Heart right ventricle (tissue), 16 donors: ENCODE measurements at regions of chr20 and their contacts with region 1.

Region 1: GRCh38 chr20:50415516-50416113 is 94.6 kb upstream of the PTPN1 start:
- DNase-seq: peak; percentile 99 to 100
- ATAC-seq: peak; percentile 96 to 99 (median 99)
- H3K4me3 ChIP-seq: peak overlapping the region in 4 of 10 donors; percentile 7 to 12 (median 11)
- H3K27ac ChIP-seq: peak overlapping the region; percentile 89 to 99 (median 96)
- H3K4me1 ChIP-seq: peaks cover 13 to 52% (median 31%) of the 10 kb centered on the region in 9 donors
- H3K27me3 ChIP-seq: no peaks in the 10 kb centered on the region
- CTCF ChIP-seq: peak in 2 of 9 donors; percentile 7 to 12

Region 2: DNA sequence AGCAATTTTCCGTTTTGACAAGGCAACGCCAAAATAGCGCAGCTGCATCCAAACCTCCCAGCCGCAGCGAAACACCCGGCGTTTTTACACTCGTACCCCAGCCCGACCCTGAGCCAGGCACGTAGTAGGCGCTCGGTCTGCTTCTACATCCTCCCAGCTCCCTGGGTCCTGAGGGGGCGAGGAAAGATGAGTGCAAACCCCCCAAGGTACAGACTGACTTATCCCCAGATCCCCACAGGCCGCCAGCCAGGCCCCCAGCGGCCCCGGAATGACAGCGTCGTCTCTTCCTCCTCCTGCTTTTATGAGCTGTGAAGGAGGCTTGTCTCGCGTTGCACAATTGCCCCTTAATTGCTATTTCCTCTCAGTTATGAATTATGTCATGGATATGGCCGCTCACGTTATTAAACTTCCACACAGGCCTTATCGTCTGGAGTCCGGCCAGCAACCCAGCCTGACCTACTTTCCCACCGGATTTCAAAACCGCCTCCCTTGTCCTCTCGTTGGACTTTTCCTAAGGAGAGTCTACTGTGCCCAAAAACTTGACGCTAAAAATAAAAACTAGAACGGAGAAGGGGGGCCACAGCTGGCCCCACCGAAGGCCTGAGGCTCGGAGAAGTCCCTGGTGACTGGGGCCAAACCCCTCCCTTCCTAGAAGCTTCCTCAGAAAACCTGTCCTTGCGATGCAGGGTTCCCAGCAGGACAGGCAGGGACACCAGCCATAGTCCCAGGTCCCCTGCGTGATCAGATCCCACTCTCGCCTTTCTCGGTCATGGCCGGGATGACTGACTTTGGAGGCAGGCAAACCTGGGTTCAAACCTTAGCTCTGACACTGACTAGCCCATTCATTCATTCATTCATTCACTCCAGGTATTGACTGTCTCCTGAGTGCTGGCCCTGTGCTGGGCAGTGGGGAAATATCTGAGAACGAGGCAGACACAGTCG is 36.3 kb before region 1 on chr20:
- intact Hi-C with region 1: loop called in 2 of 10 experiments (anchors 2 kb)
- DNase-seq: peak; percentile 89 to 94
- ATAC-seq: peak; percentile 84 to 92 (median 90)
- H3K4me3 ChIP-seq: peak overlapping the region in 8 of 10 donors; percentile 5 to 47 (median 33)
- H3K27ac ChIP-seq: peak overlapping the region; percentile 57 to 86 (median 81)
- H3K4me1 ChIP-seq: peaks cover 10 to 57% (median 24%) of the 10 kb centered on the region in 9 donors
- H3K27me3 ChIP-seq: no peaks in the 10 kb centered on the region
- CTCF ChIP-seq: no peak

Region 3: GRCh38 chr20:50395258-50395729 is 20.3 kb before region 1 on chr20:
- intact Hi-C with region 1: loop called in 3 of 10 experiments (anchors 1 to 2 kb)
- DNase-seq: peak; percentile 44 to 79
- ATAC-seq: peak in 7 of 8 donors; percentile 33 to 86 (median 78)
- H3K4me3 ChIP-seq: no peak overlapping the region
- H3K27ac ChIP-seq: peak overlapping the region; percentile 77 to 91 (median 82)
- H3K4me1 ChIP-seq: peaks cover 0 to 60% (median 37%) of the 10 kb centered on the region in 9 donors
- H3K27me3 ChIP-seq: no peaks in the 10 kb centered on the region
- CTCF ChIP-seq: no peak